ENCODE measurements at regions of chr14 and their contacts with region 1.

Region 1: GRCh38 chr14:74571901-74572725 is 39.9 kb downstream of the LTBP2 start:
- DNase-seq: peak; percentile 99
- H3K4me3 ChIP-seq: peak overlapping the region; percentile 9
- H3K27me3 ChIP-seq: no peaks in the 10 kb centered on the region
- CTCF ChIP-seq: no peak

Region 2: DNA sequence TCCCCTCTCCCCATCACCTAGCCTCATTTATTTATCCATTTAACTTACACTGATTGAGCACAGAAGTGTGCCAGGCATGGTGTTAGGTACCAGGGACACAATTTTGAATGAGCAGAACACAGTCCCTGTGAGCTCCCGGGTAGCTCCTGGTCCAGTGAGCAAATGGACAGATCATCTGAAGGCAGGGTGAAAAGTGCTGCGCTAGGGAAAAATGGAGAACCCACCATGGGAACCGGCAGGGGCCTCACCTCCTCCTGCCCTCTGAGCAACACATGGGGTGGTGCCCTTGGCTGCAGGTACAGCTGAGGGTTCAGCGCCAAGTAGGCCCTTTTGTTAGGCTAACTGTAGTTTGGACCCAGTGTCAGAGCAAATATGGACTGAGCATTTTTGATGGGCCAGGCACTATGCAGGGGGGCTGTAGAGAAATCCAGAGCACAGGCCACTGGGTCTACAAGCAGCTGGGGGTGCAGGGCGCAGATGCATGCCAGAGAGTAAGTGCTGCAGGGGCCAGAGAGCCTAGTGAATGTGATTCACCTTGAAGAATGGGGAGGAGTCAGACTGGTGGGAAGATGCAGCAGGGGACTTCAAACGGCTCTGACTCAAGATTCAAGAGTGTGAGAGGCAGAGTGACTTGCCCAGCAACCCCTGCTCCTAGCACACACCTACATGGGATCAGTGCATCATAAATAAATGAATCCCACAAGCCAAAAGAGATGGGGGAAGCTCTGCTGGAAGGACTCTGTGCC is 11.7 kb after region 1 on chr14:
- CTCF ChIA-PET with region 1: interaction called, 14 read pairs
- POLR2A ChIA-PET with region 1: interaction called, 6 read pairs
- DNase-seq: no peak
- H3K4me3 ChIP-seq: no peak overlapping the region
- H3K27me3 ChIP-seq: no peaks in the 10 kb centered on the region
- CTCF ChIP-seq: no peak